ENCODE measurements at regions of chr3 and their contacts with region 1.

Region 1: GRCh38 chr3:184229394-184230080 is at the start of gene VWA5B2:
- DNase-seq: peak; percentile 73 to 83 (median 75)
- H3K4me3 ChIP-seq: peak within 1 kb of the TSS; percentile 62
- H3K4me3 Mint-ChIP-seq: peak within 1 kb of the TSS; percentile 30 to 89 (median 75)
- H3K27ac ChIP-seq: no peak within 1 kb of the TSS
- H3K27ac Mint-ChIP-seq: peak within 1 kb of the TSS in 2 of 8 donors; percentile 42 to 50
- H3K4me1 ChIP-seq: no peaks in the 10 kb centered on the region
- H3K4me1 Mint-ChIP-seq: peaks cover 7 to 15% (median 15%) of the 10 kb centered on the region in 3 donors
- H3K27me3 ChIP-seq: peaks cover 42% of the 10 kb centered on the region
- H3K27me3 Mint-ChIP-seq: peaks cover 36 to 61% of the 10 kb centered on the region in 2 donors
- total RNA-seq, gene VWA5B2: 0.11 TPM in 1 of 2 experiments, not detected in the other

Region 2: GRCh38 chr3:184174646-184175492 is 54.7 kb before region 1 on chr3 and contains the start of gene AP2M1:
- CTCF ChIA-PET with region 1: interaction called, 10 read pairs
- POLR2A ChIA-PET with region 1: no interaction called
- DNase-seq: peak; percentile 94 to 99 (median 98)
- H3K4me3 ChIP-seq: peak within 1 kb of the TSS; percentile 88
- H3K4me3 Mint-ChIP-seq: peak within 1 kb of the TSS; percentile 90 to 99 (median 95)
- H3K27ac ChIP-seq: peak within 1 kb of the TSS; percentile 88
- H3K27ac Mint-ChIP-seq: peak within 1 kb of the TSS; percentile 88 to 95 (median 94)
- H3K4me1 ChIP-seq: peaks cover 25% of the 10 kb centered on the region
- H3K4me1 Mint-ChIP-seq: peaks cover 32 to 48% (median 44%) of the 10 kb centered on the region in 3 donors
- H3K27me3 ChIP-seq: no peaks in the 10 kb centered on the region
- H3K27me3 Mint-ChIP-seq: peaks cover 0 to 1% of the 10 kb centered on the region in 2 donors
- total RNA-seq, gene AP2M1: 268 to 270 TPM

Region 3: DNA sequence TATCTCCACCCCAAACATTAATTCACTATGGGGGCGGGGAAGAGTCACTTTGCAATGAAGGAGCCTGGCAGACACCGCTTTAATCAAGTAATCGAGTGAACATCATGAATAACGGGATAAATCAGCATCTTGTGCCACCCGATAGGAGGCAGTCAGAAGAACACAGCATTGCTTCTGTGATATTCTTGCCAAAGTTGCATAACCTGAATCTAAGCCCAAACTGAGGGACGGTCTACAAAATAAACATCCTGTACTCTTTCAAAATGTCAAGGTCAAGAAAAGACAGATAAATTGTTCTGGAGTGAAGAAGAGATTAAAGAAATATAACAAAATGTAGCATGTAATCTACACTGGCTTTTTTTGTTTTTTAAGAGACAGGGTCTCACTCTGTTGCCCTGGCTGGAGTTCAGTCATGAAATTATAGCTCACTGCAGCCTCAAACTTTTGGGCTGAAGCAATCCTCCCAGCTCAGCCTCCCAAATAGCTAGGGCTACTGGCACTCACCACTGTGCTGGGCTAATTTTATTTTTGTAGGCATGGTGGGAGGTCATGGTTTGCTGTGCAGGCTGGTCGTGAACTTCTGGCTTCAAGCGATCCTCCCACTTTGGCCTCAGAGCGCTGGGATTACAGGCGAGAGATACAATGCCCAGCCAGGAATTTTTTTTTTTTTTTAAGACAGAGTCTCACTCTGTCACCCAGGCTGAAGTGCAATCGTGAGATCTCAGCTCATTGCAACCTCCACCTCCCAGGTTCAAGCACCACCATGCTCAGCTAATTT is 20.2 kb before region 1 on chr3:
- CTCF ChIA-PET with region 1: interaction called, 21 read pairs
- POLR2A ChIA-PET with region 1: no interaction called
- DNase-seq: no peak
- H3K4me3 ChIP-seq: no peak overlapping the region
- H3K4me3 Mint-ChIP-seq: no peak overlapping the region
- H3K27ac ChIP-seq: no peak overlapping the region
- H3K27ac Mint-ChIP-seq: no peak overlapping the region
- H3K4me1 ChIP-seq: no peaks in the 10 kb centered on the region
- H3K4me1 Mint-ChIP-seq: no peaks in the 10 kb centered on the region
- H3K27me3 ChIP-seq: no peaks in the 10 kb centered on the region
- H3K27me3 Mint-ChIP-seq: peaks cover 15 to 20% of the 10 kb centered on the region in 2 donors

Region 4: DNA sequence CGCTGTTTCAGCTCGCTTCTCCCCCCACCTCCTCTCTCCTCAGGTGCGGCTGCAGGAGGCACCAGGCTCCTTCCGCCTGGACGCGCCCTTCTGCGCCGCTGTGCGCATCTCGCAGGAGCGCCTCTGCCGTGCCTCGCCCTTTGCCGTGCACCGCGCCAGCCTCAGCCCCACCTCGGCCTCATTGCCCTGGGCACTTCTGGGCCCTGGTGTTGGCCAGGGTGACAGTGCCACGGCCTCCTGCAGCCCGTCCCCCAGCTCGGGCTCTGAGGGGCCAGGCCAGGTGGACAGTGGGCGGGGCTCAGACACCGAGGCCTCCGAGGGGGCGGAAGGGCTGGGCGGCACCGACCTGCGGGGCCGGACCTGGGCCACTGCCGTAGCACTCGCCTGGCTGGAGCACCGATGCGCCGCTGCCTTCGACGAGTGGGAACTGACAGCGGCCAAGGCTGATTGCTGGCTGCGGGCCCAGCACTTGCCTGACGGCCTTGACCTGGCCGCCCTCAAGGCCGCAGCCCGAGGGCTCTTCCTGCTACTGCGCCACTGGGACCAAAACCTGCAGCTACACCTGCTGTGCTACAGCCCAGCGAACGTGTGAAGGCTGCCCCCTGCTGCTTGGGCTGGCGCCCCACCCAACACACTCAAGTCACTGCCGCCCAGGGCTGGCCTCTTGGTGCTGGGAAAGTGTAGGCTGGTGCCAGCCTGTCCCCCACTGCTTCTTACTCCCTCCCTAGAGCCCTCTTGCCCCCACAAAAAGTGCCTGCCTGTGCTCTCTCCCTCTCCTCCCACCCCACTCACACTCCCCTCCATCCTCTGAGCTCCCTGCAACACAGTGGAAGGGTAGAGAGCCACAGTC is 12.1 kb after region 1 on chr3:
- CTCF ChIA-PET with region 1: interaction called, 27 read pairs
- POLR2A ChIA-PET with region 1: no interaction called
- DNase-seq: no peak
- H3K4me3 ChIP-seq: no peak overlapping the region
- H3K4me3 Mint-ChIP-seq: no peak overlapping the region
- H3K27ac ChIP-seq: no peak overlapping the region
- H3K27ac Mint-ChIP-seq: peak overlapping the region in 2 of 8 donors; percentile 6 to 39
- H3K4me1 ChIP-seq: no peaks in the 10 kb centered on the region
- H3K4me1 Mint-ChIP-seq: peaks cover 2 to 7% (median 5%) of the 10 kb centered on the region in 3 donors
- H3K27me3 ChIP-seq: no peaks in the 10 kb centered on the region
- H3K27me3 Mint-ChIP-seq: peaks cover 0 to 6% of the 10 kb centered on the region in 2 donors

Region 5: DNA sequence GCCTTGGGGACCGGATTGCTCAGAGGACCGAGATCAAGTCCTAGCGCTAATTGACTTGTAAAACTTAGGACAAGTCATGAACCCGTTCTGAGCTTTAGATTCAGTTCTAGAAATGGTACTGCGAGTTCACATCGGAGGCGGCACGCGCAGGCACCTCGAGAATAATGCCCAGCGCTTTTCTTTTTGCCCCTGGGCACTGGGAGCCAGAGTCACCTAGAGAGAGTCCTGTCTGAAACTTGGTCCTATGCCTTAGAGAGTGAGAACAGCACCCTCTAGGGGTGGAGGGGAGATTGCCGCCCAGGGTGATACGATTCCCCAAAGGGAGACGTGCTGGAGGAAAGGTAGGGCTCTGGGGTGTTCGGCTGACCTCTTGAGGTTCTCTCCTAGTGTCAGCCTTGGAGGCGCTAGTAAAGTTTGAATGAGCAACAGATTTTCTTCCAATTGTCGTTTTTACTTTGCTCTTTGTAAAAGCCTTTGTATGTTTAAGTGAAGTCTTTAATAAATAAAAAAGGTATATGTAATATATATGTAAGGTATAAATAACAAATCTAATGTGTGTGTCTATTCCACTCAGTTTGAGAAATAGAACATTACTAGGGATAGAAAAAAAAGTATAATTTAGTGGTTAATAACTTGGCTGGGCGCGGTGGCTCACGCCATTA is 20.8 kb after region 1 on chr3:
- CTCF ChIA-PET with region 1: interaction called, 36 read pairs
- POLR2A ChIA-PET with region 1: no interaction called
- DNase-seq: peak; percentile 79 to 91 (median 85)
- H3K4me3 ChIP-seq: peak overlapping the region; percentile 94
- H3K4me3 Mint-ChIP-seq: peak overlapping the region; percentile 92 to 98 (median 96)
- H3K27ac ChIP-seq: peak overlapping the region; percentile 41
- H3K27ac Mint-ChIP-seq: peak overlapping the region; percentile 86 to 99 (median 94)
- H3K4me1 ChIP-seq: peaks cover 10% of the 10 kb centered on the region
- H3K4me1 Mint-ChIP-seq: peaks cover 12 to 26% (median 18%) of the 10 kb centered on the region in 3 donors
- H3K27me3 ChIP-seq: no peaks in the 10 kb centered on the region
- H3K27me3 Mint-ChIP-seq: no peaks in the 10 kb centered on the region

Measured in CD8-positive, alpha-beta memory T cell (primary cell).